ENCODE measurements at regions of chr9 and their contacts with region 1.

Region 1: DNA sequence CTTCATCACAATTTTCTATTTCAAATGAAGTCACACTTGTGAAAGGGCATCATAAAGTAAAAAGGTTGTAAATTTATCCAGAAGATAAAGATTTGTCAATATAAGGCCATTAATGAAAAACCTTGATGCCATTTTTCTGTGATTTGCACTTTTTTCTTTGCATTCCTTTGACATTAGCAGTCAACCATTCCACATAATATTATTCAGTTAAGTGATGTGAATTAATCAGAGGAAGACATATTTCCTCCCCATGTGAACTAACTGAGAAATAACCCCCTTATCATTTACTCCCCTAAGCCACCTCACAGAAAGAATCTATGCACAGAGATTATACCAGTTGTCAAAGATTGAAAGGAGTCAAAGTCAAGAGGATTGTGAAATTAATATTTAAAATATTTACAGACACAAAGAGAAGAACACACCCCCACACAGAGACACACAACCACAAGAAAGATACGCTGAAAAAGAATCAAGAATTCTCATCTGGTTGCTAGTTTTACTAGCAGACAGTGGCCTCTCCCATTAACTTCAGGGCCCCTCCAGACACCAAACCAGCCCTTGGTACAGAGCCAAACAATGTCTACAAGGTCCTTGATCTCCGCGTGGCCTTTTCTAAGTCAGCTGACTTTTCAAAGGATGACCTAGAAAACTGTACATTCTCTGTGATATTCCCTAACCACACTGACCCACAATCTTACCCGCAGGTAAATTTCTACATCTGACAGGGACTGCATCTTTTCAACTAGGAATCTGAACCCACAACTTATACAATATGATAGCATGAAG is 29.5 kb downstream of the GNAQ start:
- DNase-seq: no peak

Region 2: DNA sequence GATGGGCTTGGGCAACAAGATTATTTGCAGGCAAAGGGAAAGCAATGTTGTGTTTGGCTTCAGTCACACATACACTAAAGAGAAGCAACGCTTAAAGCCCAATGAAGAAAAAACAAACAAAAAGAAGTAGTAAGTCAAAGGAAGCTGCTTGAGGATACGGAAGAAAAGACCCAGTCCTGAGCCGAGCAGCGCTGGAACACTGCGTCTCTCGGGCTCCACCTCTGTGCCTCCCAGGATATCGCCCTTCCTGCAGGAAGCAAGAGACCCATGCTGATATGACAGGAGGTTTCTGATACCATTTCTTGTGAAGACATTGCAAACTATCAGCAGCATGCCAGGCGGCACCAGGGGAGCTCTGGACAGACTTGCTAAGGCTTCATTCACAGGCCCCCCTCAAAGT is 19.6 kb after region 1 on chr9:
- intact Hi-C with region 1: loop called (anchors 2 kb)
- DNase-seq: no peak

Measured in cardiac septum (tissue), 1 donor.